ENCODE measurements at regions of chr15 and their contacts with region 1.

Region 1: GRCh38 chr15:27509014-27509413 is 538.0 kb downstream of the GABRG3 start:
- DNase-seq: no peak
- H3K4me3 ChIP-seq: no peak overlapping the region
- H3K4me3 Mint-ChIP-seq: no peak overlapping the region
- H3K27ac ChIP-seq: no peak overlapping the region
- H3K27ac Mint-ChIP-seq: no peak overlapping the region
- H3K4me1 ChIP-seq: no peaks in the 10 kb centered on the region
- H3K4me1 Mint-ChIP-seq: no peaks in the 10 kb centered on the region
- H3K27me3 ChIP-seq: no peaks in the 10 kb centered on the region
- H3K27me3 Mint-ChIP-seq: no peaks in the 10 kb centered on the region
- CTCF ChIP-seq: no peak

Region 2: GRCh38 chr15:27473845-27474244 is 35.2 kb before region 1 on chr15:
- intact Hi-C with region 1: loop called in 1 of 2 experiments (anchors 5 kb)
- DNase-seq: no peak
- H3K4me3 ChIP-seq: no peak overlapping the region
- H3K4me3 Mint-ChIP-seq: no peak overlapping the region
- H3K27ac ChIP-seq: no peak overlapping the region
- H3K27ac Mint-ChIP-seq: no peak overlapping the region
- H3K4me1 ChIP-seq: no peaks in the 10 kb centered on the region
- H3K4me1 Mint-ChIP-seq: no peaks in the 10 kb centered on the region
- H3K27me3 ChIP-seq: no peaks in the 10 kb centered on the region
- H3K27me3 Mint-ChIP-seq: no peaks in the 10 kb centered on the region
- CTCF ChIP-seq: no peak

Measured in CD14-positive monocyte (primary cell).